CD8-positive, alpha-beta T cell (primary cell): ENCODE measurements at regions of chr3 and their contacts with region 1.

Region 1: DNA sequence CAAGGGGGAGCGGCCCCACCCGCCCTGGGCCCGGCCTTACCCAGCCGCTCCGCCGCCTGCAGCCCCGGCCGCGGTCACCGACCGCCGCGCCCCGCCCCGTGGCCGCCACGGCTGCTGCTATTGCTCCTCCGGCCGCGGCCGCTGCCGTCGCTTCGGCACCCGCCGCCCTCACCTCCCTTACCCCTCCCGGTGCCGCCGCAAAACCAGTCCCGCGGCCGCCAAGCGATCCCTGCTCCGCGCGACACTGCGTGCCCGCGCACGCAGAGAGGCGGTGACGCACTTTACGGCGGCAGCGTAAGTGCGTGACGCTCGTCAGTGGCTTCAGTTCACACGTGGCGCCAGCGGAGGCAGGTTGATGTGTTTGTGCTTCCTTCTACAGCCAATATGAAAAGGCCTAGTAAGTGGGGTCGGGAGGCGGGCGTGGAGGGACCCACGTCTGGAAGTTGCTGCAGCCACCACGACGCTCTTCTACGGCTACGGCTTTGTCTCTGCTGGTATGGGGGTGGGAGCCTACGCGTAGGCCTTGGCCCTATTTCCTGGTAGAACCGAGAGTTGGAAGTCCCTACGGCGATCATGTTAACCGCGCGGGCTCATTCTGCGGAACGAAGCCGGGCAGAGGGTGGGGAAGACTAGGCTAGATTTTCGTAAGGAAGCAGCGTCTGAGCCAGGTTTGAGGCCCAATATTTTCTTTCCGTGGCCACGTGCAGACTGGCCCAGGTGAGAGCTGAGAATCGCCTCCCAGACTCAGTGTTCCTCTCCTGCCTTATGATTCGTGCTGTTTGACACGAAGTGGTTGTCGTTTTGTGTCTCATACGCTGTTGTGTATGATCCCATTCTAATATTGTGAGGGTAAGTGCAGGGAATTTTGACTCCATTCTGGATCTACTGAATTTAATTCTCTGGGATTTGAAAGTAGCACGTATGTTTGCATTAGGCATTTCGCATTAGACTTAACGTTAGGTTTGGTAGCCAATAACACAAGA is at the starts of genes GNL3 and PBRM1:
- DNase-seq: peak; percentile 85 to 98 (median 90)
- ATAC-seq: peak; percentile 90
- H3K4me3 ChIP-seq: peak within 1 kb of the TSS; percentile 63 to 83
- H3K4me3 Mint-ChIP-seq: peak within 1 kb of the TSS; percentile 99
- H3K27ac ChIP-seq: peak within 1 kb of the TSS; percentile 61 to 91
- H3K27ac Mint-ChIP-seq: peak within 1 kb of the TSS; percentile 98
- H3K4me1 ChIP-seq: peaks cover 22% of the 10 kb centered on the region
- H3K4me1 Mint-ChIP-seq: peaks cover 59% of the 10 kb centered on the region
- H3K27me3 ChIP-seq: no peaks in the 10 kb centered on the region
- H3K27me3 Mint-ChIP-seq: no peaks in the 10 kb centered on the region
- CTCF ChIP-seq: no peak
- total RNA-seq, gene GNL3: 110 to 113 TPM
- total RNA-seq, gene PBRM1: 45.9 to 49.2 TPM

Region 2: GRCh38 chr3:52536369-52537164 is 149.4 kb before region 1 on chr3 and contains the start of gene UQCC5:
- CTCF ChIA-PET with region 1: no interaction called
- POLR2A ChIA-PET with region 1: no interaction called
- intact Hi-C with region 1: loop called (anchors 1 to 10 kb)
- DNase-seq: peak; percentile 92 to 99 (median 95)
- ATAC-seq: peak; percentile 88
- H3K4me3 ChIP-seq: peak within 1 kb of the TSS; percentile 79 to 88
- H3K4me3 Mint-ChIP-seq: peak within 1 kb of the TSS; percentile 99
- H3K27ac ChIP-seq: peak within 1 kb of the TSS; percentile 82 to 83
- H3K27ac Mint-ChIP-seq: peak within 1 kb of the TSS; percentile 98
- H3K4me1 ChIP-seq: peaks cover 41% of the 10 kb centered on the region
- H3K4me1 Mint-ChIP-seq: peaks cover 55% of the 10 kb centered on the region
- H3K27me3 ChIP-seq: peaks cover 0 to 8% of the 10 kb centered on the region in 2 experiments
- H3K27me3 Mint-ChIP-seq: no peaks in the 10 kb centered on the region
- CTCF ChIP-seq: no peak
- total RNA-seq, gene UQCC5: 5.2 to 6.8 TPM

Region 3: GRCh38 chr3:52770496-52771333 is 84.7 kb after region 1 on chr3 and contains the start of gene NEK4:
- CTCF ChIA-PET with region 1: no interaction called
- POLR2A ChIA-PET with region 1: interaction called, 3 read pairs
- intact Hi-C with region 1: loop called in 1 of 2 experiments (anchors 1 kb)
- DNase-seq: peak; percentile 49 to 92 (median 84)
- ATAC-seq: peak; percentile 89
- H3K4me3 ChIP-seq: peak within 1 kb of the TSS; percentile 60 to 81
- H3K4me3 Mint-ChIP-seq: peak within 1 kb of the TSS; percentile 98
- H3K27ac ChIP-seq: peak within 1 kb of the TSS; percentile 42 to 68
- H3K27ac Mint-ChIP-seq: peak within 1 kb of the TSS; percentile 93
- H3K4me1 ChIP-seq: peaks cover 9% of the 10 kb centered on the region
- H3K4me1 Mint-ChIP-seq: peaks cover 19% of the 10 kb centered on the region
- H3K27me3 ChIP-seq: no peaks in the 10 kb centered on the region
- H3K27me3 Mint-ChIP-seq: no peaks in the 10 kb centered on the region
- CTCF ChIP-seq: no peak
- total RNA-seq, gene NEK4: 5.1 to 5.6 TPM

Region 4: GRCh38 chr3:53045518-53046170 is 359.6 kb after region 1 on chr3 and contains the start of gene SFMBT1:
- CTCF ChIA-PET with region 1: no interaction called
- POLR2A ChIA-PET with region 1: no interaction called
- intact Hi-C with region 1: loop called (anchors 1 to 5 kb)
- DNase-seq: peak; percentile 52 to 91 (median 78)
- ATAC-seq: peak; percentile 49
- H3K4me3 ChIP-seq: peak within 1 kb of the TSS; percentile 85 to 88
- H3K4me3 Mint-ChIP-seq: peak within 1 kb of the TSS; percentile 98
- H3K27ac ChIP-seq: peak within 1 kb of the TSS; percentile 81 to 83
- H3K27ac Mint-ChIP-seq: peak within 1 kb of the TSS; percentile 99
- H3K4me1 ChIP-seq: peaks cover 37% of the 10 kb centered on the region
- H3K4me1 Mint-ChIP-seq: peaks cover 35% of the 10 kb centered on the region
- H3K27me3 ChIP-seq: no peaks in the 10 kb centered on the region
- H3K27me3 Mint-ChIP-seq: no peaks in the 10 kb centered on the region
- CTCF ChIP-seq: no peak
- total RNA-seq, gene SFMBT1: 23.6 to 26.2 TPM

Region 5: GRCh38 chr3:53357457-53357856 is 671.5 kb after region 1 on chr3:
- CTCF ChIA-PET with region 1: no interaction called
- POLR2A ChIA-PET with region 1: no interaction called
- intact Hi-C with region 1: no loop called
- DNase-seq: no peak
- ATAC-seq: no peak
- H3K4me3 ChIP-seq: no peak overlapping the region
- H3K4me3 Mint-ChIP-seq: no peak overlapping the region
- H3K27ac ChIP-seq: no peak overlapping the region
- H3K27ac Mint-ChIP-seq: no peak overlapping the region
- H3K4me1 ChIP-seq: no peaks in the 10 kb centered on the region
- H3K4me1 Mint-ChIP-seq: no peaks in the 10 kb centered on the region
- H3K27me3 ChIP-seq: no peaks in the 10 kb centered on the region
- H3K27me3 Mint-ChIP-seq: peaks cover 3% of the 10 kb centered on the region
- CTCF ChIP-seq: no peak

Region 6: GRCh38 chr3:53881691-53882593 is 1195.9 kb after region 1 on chr3 and contains the start of gene ACTR8:
- CTCF ChIA-PET with region 1: no interaction called
- POLR2A ChIA-PET with region 1: no interaction called
- intact Hi-C with region 1: loop called in 1 of 2 experiments (anchors 10 kb)
- DNase-seq: peak; percentile 72 to 90 (median 85)
- ATAC-seq: peak; percentile 86
- H3K4me3 ChIP-seq: peak within 1 kb of the TSS; percentile 79 to 88
- H3K4me3 Mint-ChIP-seq: peak within 1 kb of the TSS; percentile 97
- H3K27ac ChIP-seq: peak within 1 kb of the TSS; percentile 76 to 81
- H3K27ac Mint-ChIP-seq: peak within 1 kb of the TSS; percentile 97
- H3K4me1 ChIP-seq: peaks cover 28% of the 10 kb centered on the region
- H3K4me1 Mint-ChIP-seq: peaks cover 35% of the 10 kb centered on the region
- H3K27me3 ChIP-seq: no peaks in the 10 kb centered on the region
- H3K27me3 Mint-ChIP-seq: no peaks in the 10 kb centered on the region
- CTCF ChIP-seq: no peak
- total RNA-seq, gene ACTR8: 20.3 to 23.7 TPM